Activated CD4-positive, alpha-beta T cell treated with anti-CD3 and anti-CD28 coated beads, Interleukin-2, amount 10 ng/mL, durations not matched to agents 24 days and 14 days (primary cell): ENCODE measurements at regions of chr15 and their contacts with region 1.

Region 1: DNA sequence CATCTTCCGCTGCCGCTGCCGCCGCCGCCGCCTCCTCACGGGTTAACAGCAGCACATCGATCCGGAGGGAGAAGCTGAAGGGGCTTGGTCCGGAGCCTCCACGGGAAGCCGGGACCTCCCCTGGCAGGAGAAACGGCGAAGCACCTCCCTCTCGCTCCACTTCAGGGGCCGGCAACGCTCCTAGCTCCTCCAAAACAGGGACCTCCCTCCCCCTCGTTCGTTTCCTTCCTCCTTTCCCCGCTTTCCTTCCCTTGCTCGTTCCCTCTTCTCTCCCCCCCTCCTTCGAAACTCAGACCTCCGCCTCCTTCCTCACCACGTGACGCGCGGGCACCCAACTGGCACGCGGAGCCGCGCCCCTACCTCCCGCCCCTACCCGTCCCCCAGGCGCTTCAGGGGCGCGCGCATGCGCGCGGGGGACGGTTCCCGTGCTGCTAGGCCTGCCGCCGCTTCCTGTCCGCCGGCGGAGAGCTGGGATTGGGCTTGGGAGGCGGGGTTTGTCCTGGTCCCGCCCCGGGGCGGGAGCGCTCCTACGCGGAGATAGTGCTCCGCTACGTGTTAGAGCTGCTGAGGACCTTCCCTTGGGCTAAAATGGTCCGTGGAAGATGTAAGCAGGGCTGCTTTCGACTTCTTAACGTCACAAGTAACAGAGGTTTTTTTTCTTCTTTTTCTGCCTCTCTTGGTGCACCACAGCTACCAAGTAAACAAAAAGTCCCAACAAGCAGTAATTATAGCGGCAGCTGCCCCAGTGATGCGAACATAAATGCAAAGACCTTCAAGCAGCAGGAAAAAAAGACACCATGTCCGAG is at the start of gene ADAM10:
- DNase-seq: peak; percentile 99
- H3K4me3 Mint-ChIP-seq: peak within 1 kb of the TSS; percentile 92
- H3K27ac Mint-ChIP-seq: peak within 1 kb of the TSS; percentile 92
- H3K4me1 Mint-ChIP-seq: peaks cover 31% of the 10 kb centered on the region
- H3K27me3 Mint-ChIP-seq: no peaks in the 10 kb centered on the region
- total RNA-seq, gene ADAM10: 103 and 111 TPM in 2 replicates

Region 2: GRCh38 chr15:58331903-58332675 is 417.6 kb before region 1 on chr15:
- intact Hi-C with region 1: loop called (anchors 5 kb)
- DNase-seq: peak; percentile 94
- H3K4me3 Mint-ChIP-seq: peak overlapping the region; percentile 61
- H3K27ac Mint-ChIP-seq: peak overlapping the region; percentile 98
- H3K4me1 Mint-ChIP-seq: peaks cover 49% of the 10 kb centered on the region
- H3K27me3 Mint-ChIP-seq: no peaks in the 10 kb centered on the region

Region 3: GRCh38 chr15:58517682-58518525 is 231.8 kb before region 1 on chr15:
- intact Hi-C with region 1: loop called (anchors 2 kb)
- DNase-seq: peak; percentile 77
- H3K4me3 Mint-ChIP-seq: peak overlapping the region; percentile 37
- H3K27ac Mint-ChIP-seq: peak overlapping the region; percentile 86
- H3K4me1 Mint-ChIP-seq: peaks cover 70% of the 10 kb centered on the region
- H3K27me3 Mint-ChIP-seq: no peaks in the 10 kb centered on the region

Region 4: GRCh38 chr15:58528188-58528870 is 221.4 kb before region 1 on chr15:
- intact Hi-C with region 1: no loop called
- DNase-seq: no peak
- H3K4me3 Mint-ChIP-seq: no peak overlapping the region
- H3K27ac Mint-ChIP-seq: no peak overlapping the region
- H3K4me1 Mint-ChIP-seq: peaks cover 5% of the 10 kb centered on the region
- H3K27me3 Mint-ChIP-seq: no peaks in the 10 kb centered on the region

Region 5: DNA sequence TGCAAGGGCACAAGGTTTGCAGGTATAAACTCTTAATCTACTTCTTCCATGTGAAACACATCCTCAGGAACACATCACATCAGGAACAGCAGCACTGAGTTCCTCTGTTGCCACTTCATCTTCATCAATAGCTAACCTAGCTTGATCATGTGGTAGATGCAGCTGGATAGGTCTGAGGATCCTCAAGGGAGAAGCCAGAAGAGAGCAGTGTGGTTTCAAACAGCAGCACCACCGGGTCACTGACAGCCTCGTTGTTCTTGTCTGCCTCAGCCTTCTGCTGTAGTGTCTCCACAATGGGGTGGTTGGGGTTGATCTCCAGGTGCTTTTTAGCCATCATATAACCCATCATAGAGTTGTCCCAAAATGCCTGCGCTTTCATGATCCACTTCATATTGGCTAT is 59.0 kb before region 1 on chr15:
- intact Hi-C with region 1: loop called (anchors 5 kb)
- DNase-seq: peak; percentile 62
- H3K4me3 Mint-ChIP-seq: no peak overlapping the region
- H3K27ac Mint-ChIP-seq: no peak overlapping the region
- H3K4me1 Mint-ChIP-seq: peaks cover 25% of the 10 kb centered on the region
- H3K27me3 Mint-ChIP-seq: no peaks in the 10 kb centered on the region

Region 6: DNA sequence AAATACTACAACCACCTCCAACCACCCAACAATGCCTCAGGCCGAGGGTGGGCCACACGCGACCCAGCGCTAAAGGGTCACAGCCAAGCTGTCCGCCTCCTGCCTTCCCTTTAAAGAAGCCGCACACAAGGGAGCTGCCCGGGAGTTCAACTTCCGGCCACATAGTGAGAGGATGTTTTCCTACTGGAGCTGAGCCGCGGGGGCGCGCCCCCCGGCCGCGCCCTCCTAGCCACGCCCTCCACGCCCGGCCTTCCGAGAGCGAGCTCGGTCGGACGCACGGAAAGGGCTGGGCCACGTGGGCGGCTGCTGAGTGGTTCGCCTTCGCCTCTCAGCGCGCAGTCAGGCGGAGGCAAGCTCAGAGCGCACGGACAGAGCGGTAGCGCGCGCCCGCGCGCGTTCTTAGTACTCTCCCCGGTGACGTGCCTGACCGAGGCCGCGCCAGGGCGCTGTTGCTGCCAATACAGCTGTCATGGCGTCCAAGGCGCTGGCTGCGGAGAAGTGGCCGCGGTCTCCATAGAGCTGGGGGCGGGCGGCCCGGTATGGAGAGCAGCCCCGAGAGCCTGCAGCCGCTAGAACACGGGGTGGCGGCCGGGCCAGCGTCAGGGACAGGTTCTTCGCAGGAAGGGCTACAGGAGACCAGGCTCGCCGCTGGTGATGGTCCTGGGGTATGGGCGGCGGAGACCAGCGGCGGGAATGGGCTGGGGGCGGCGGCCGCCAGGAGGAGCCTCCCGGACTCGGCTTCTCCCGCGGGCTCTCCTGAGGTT is 21.3 kb after region 1 on chr15 and contains the start of gene MINDY2:
- intact Hi-C with region 1: loop called (anchors 1 kb)
- DNase-seq: peak; percentile 98
- H3K4me3 Mint-ChIP-seq: no peak within 1 kb of the TSS
- H3K27ac Mint-ChIP-seq: peak within 1 kb of the TSS; percentile 93
- H3K4me1 Mint-ChIP-seq: peaks cover 16% of the 10 kb centered on the region
- H3K27me3 Mint-ChIP-seq: peaks cover 2% of the 10 kb centered on the region
- total RNA-seq, gene MINDY2: 10.1 and 10.9 TPM in 2 replicates

Region 7: GRCh38 chr15:58980351-58980939 is 230.7 kb after region 1 on chr15:
- intact Hi-C with region 1: no loop called
- DNase-seq: no peak
- H3K4me3 Mint-ChIP-seq: no peak overlapping the region
- H3K27ac Mint-ChIP-seq: no peak overlapping the region
- H3K4me1 Mint-ChIP-seq: peaks cover 33% of the 10 kb centered on the region
- H3K27me3 Mint-ChIP-seq: peaks cover 15% of the 10 kb centered on the region

Region 8: GRCh38 chr15:59562448-59563186 is 812.9 kb after region 1 on chr15:
- intact Hi-C with region 1: no loop called
- DNase-seq: no peak
- H3K4me3 Mint-ChIP-seq: no peak overlapping the region
- H3K27ac Mint-ChIP-seq: no peak overlapping the region
- H3K4me1 Mint-ChIP-seq: no peaks in the 10 kb centered on the region
- H3K27me3 Mint-ChIP-seq: peaks cover 15% of the 10 kb centered on the region